CD14-positive monocyte (primary cell): ENCODE measurements at regions of chr12 and their contacts with region 1.

Region 1: DNA sequence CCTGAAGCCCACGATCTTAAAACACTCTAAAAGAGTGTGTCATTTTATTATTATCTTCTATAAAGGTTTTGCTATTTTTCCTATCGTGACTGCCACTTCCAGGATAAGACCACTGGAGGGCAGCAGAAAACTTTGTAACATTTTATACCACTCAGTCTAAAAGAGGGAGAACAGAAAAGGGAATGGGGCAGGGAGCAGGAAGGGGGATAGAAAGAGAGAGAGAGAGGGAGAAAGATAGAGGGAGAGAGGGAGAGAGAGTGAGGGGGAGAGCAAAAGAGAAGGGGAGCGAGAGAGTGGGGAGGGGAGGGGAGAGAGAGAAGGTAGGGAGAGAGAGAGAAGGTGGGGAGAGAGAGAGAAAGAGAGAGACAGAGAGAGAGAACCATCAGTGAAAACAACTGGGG is 2.0 kb upstream of the ART4 start:
- DNase-seq: peak; percentile 21 to 52 (median 43)
- H3K4me3 ChIP-seq: no peak overlapping the region
- H3K4me3 Mint-ChIP-seq: no peak overlapping the region
- H3K27ac ChIP-seq: no peak overlapping the region
- H3K27ac Mint-ChIP-seq: no peak overlapping the region
- H3K4me1 ChIP-seq: no peaks in the 10 kb centered on the region
- H3K4me1 Mint-ChIP-seq: peaks cover 2% of the 10 kb centered on the region
- H3K27me3 ChIP-seq: no peaks in the 10 kb centered on the region
- H3K27me3 Mint-ChIP-seq: peaks cover 0 to 2% (median 0%) of the 10 kb centered on the region in 3 donors
- CTCF ChIP-seq: peak; percentile 74

Region 2: DNA sequence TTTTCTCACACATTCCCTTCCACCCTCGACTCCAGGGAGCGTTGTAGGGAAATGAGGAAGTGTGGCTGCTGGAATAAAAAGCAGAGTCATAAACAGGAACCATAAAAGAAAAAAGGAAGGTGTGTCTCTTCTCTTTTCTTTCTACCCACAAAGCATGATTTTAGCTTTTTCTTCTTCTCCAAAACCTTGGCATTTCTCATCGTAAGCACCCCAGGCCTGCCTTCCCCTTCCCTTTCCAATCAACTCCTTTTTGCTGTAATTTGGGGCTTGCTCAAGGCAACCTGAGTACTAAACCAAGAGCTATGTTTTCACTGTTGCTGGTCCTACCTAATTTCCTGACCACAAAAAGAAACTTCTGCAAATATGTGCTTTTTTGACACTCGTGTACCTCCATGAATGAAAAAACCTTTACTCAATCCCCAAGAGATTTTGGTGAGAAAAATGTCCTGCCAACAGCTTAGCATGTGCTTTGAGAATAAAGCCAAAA is 286.8 kb before region 1 on chr12:
- intact Hi-C with region 1: no loop called
- DNase-seq: peak; percentile 63 to 82 (median 70)
- H3K4me3 ChIP-seq: peak overlapping the region in 1 of 3 experiments; percentile 54
- H3K4me3 Mint-ChIP-seq: peak overlapping the region; percentile 1 to 69
- H3K27ac ChIP-seq: peak overlapping the region in 1 of 2 donors; percentile 81
- H3K27ac Mint-ChIP-seq: peak overlapping the region; percentile 84 to 97 (median 94)
- H3K4me1 ChIP-seq: peaks cover 87 to 99% of the 10 kb centered on the region in 2 donors
- H3K4me1 Mint-ChIP-seq: peaks cover 61% of the 10 kb centered on the region
- H3K27me3 ChIP-seq: no peaks in the 10 kb centered on the region
- H3K27me3 Mint-ChIP-seq: no peaks in the 10 kb centered on the region
- CTCF ChIP-seq: no peak

Region 3: GRCh38 chr12:14723763-14724162 is 121.6 kb before region 1 on chr12:
- intact Hi-C with region 1: no loop called
- DNase-seq: peak; percentile 27 to 47 (median 37)
- H3K4me3 ChIP-seq: no peak overlapping the region
- H3K4me3 Mint-ChIP-seq: no peak overlapping the region
- H3K27ac ChIP-seq: no peak overlapping the region
- H3K27ac Mint-ChIP-seq: no peak overlapping the region
- H3K4me1 ChIP-seq: no peaks in the 10 kb centered on the region
- H3K4me1 Mint-ChIP-seq: no peaks in the 10 kb centered on the region
- H3K27me3 ChIP-seq: no peaks in the 10 kb centered on the region
- H3K27me3 Mint-ChIP-seq: peaks cover 3 to 5% (median 3%) of the 10 kb centered on the region in 3 donors
- CTCF ChIP-seq: peak; percentile 75

Region 4: DNA sequence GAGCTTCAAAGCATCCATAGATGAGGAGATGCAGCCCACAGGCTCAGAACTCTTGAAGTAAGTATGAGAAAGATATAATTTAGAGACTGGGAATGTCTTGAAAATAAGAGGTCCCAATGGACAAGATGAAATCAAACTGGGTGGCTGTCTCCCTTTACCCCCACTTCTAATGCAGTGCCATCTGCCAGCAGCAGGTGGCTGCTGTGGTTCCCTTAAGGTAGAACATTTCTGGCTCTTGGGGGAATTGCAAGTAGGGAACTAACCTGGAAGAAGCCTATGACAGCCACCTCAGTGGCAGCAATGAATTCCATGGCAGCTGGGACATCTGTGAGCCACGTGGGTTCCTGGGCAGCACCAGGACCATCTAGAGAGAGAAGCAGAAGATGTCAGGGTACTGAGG is 92.3 kb after region 1 on chr12:
- intact Hi-C with region 1: loop called in 1 of 2 experiments (anchors 10 kb)
- DNase-seq: peak in 1 of 3 donors; percentile 32
- H3K4me3 ChIP-seq: no peak overlapping the region
- H3K4me3 Mint-ChIP-seq: no peak overlapping the region
- H3K27ac ChIP-seq: no peak overlapping the region
- H3K27ac Mint-ChIP-seq: peak overlapping the region in 4 of 7 donors; percentile 22 to 82 (median 56)
- H3K4me1 ChIP-seq: peaks cover 6 to 21% of the 10 kb centered on the region in 2 donors
- H3K4me1 Mint-ChIP-seq: peaks cover 35% of the 10 kb centered on the region
- H3K27me3 ChIP-seq: no peaks in the 10 kb centered on the region
- H3K27me3 Mint-ChIP-seq: no peaks in the 10 kb centered on the region
- CTCF ChIP-seq: peak; percentile 51

Region 5: DNA sequence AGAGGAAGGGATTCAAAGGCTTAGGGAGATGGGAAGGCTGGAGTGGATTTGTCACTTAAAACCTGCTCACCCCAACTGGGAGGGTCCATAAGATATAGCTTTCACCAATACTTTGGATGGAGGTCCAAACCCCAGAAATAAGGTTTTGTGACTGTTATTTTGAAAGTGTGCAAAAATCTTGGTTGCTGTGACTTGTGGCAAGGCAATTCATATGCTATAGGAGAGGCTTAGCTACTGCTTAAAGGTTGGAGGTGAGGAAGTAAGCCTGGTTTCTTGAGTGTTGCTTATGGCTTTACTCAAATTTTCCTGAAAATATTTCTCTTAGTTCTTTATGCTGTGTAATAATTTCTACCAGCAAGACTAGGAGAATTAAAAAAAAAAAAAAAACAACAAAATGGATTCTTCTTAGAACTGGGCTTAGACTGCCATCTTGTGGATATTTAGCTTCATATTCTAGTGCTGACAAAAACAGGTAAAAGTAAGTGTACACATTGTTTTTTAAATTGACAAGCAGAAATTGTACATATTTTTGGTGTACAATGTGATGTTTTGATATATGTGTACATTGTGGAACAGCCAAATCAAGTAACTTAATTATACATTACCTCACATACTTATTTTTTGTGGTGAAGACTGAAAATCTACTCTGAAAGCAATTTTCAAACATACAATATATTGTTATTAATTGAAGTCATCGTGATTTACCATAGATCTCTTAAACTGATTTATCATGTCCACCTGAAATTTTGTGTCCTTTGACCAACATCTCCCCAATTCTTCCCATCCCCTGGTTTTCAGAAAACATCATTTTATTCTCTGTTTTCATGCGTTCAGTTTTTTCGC is 150.5 kb after region 1 on chr12:
- intact Hi-C with region 1: loop called (anchors 5 kb)
- DNase-seq: peak; percentile 36 to 68 (median 63)
- H3K4me3 ChIP-seq: no peak overlapping the region
- H3K4me3 Mint-ChIP-seq: no peak overlapping the region
- H3K27ac ChIP-seq: peak overlapping the region in 1 of 2 donors; percentile 4
- H3K27ac Mint-ChIP-seq: peak overlapping the region in 3 of 7 donors; percentile 33 to 70 (median 38)
- H3K4me1 ChIP-seq: peaks cover 6 to 21% of the 10 kb centered on the region in 2 donors
- H3K4me1 Mint-ChIP-seq: peaks cover 27% of the 10 kb centered on the region
- H3K27me3 ChIP-seq: no peaks in the 10 kb centered on the region
- H3K27me3 Mint-ChIP-seq: peaks cover 1 to 4% (median 3%) of the 10 kb centered on the region in 3 donors
- CTCF ChIP-seq: peak; percentile 80